ENCODE measurements at regions of chr1 and their contacts with region 1.

Region 1: DNA sequence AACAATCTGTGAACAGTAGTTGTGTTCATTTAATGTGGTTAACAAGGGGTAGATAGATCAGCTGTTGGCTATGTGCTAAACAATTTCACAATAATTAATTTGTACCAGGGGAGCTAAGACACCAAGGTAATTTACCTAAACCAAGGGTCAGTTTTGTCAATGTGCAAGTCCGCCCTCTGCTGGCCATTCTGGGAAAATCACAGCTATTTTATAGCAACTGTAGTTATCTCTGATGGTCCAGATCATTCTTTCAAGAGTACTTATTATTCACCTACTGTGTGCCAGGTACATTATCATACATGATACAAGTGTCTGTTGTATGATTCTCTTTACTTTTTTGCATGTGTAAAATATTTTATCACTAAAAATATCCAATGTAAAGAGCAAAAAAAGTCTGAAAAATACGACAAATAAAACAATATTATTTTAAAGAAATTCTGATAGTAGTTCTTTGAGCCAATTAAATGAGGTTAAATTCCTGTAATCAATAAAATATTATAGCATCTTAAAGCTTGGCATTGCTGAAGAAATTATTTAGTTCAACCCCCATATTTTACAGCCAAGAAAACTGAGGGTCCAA is 312.3 kb upstream of the FAM78B start:
- DNase-seq: no peak
- H3K4me3 ChIP-seq: no peak overlapping the region
- H3K27ac ChIP-seq: no peak overlapping the region
- H3K4me1 ChIP-seq: no peaks in the 10 kb centered on the region
- H3K27me3 ChIP-seq: no peaks in the 10 kb centered on the region
- CTCF ChIP-seq: peak; percentile 47 to 64 (median 62)
- POLR2A ChIP-seq: no peak

Region 2: GRCh38 chr1:165949335-165950130 is 529.6 kb before region 1 on chr1:
- intact Hi-C with region 1: loop called (anchors 10 kb)
- DNase-seq: peak; percentile 67 to 74
- H3K4me3 ChIP-seq: no peak overlapping the region
- H3K27ac ChIP-seq: no peak overlapping the region
- H3K4me1 ChIP-seq: no peaks in the 10 kb centered on the region
- H3K27me3 ChIP-seq: no peaks in the 10 kb centered on the region
- CTCF ChIP-seq: no peak
- POLR2A ChIP-seq: no peak

Region 3: DNA sequence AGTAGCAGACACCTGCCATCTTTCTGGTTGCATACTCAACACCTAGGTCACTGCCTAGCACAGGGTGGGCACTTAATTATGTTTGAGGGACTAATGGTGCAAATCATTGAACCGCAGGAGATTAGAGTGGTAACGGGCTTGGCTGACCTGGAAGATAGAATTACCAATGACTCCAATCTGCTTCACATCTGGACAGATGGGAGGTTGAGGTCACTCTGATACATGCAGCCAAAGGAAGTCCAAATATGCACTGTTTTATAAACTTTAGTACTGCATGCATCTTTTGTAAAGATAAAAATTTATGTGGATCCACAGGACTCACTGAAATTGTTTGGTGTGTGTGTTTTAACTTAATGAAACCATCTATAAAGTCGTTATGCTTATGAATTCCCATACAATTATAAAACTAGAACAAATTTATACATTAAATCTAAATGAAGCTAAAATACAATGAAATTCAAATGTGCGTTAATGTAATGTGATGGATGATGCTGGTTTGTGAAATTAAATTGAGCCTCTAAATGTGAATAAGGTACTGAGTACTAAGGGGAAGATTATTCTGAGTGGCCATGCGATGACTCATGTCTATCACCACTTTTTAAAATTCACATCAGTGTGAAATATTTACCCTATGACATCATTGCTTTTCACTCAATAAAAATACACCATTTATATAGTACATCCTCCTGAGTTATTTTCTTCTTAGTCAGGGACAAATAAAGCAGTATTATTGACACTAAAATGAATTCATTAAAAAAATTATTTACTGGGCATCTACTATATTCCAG is 87.7 kb before region 1 on chr1:
- intact Hi-C with region 1: no loop called
- DNase-seq: no peak
- H3K4me3 ChIP-seq: no peak overlapping the region
- H3K27ac ChIP-seq: no peak overlapping the region
- H3K4me1 ChIP-seq: no peaks in the 10 kb centered on the region
- H3K27me3 ChIP-seq: no peaks in the 10 kb centered on the region
- CTCF ChIP-seq: no peak
- POLR2A ChIP-seq: no peak

Region 4: GRCh38 chr1:166612886-166613285 is 133.7 kb after region 1 on chr1:
- intact Hi-C with region 1: no loop called
- DNase-seq: no peak
- H3K4me3 ChIP-seq: no peak overlapping the region
- H3K27ac ChIP-seq: no peak overlapping the region
- H3K4me1 ChIP-seq: no peaks in the 10 kb centered on the region
- H3K27me3 ChIP-seq: no peaks in the 10 kb centered on the region
- CTCF ChIP-seq: no peak
- POLR2A ChIP-seq: no peak

Region 5: GRCh38 chr1:166705376-166706289 is 226.5 kb after region 1 on chr1:
- intact Hi-C with region 1: no loop called
- DNase-seq: no peak
- H3K4me3 ChIP-seq: no peak overlapping the region
- H3K27ac ChIP-seq: no peak overlapping the region
- H3K4me1 ChIP-seq: no peaks in the 10 kb centered on the region
- H3K27me3 ChIP-seq: no peaks in the 10 kb centered on the region
- CTCF ChIP-seq: no peak
- POLR2A ChIP-seq: no peak

Measured in vagina (tissue), 2 donors.